GM12878 (cell line): ENCODE measurements at regions of chr1 and their contacts with region 1.

Region 1: DNA sequence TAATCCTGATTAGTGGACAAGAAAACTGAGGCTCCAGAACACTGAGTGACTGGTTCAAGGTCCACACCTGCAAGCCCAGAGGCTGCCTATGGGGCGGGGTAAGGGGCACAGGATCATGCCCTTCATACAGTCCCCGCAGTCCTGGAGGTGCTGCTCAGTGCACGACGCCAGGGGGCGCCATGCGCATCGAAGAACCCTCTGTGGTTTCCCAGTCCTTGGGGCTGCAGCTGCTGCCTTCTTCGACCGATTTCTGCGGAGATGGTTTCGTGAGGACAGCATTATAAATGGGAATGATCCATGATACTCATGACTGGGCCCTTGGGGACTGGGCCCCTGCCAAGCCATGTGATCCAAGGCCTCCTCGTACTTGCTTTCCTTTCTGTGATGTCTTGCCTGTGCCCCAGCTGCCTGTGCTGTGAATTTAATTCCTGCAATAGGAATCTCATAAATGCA is 37.1 kb upstream of the ARHGEF10L start:
- DNase-seq: peak; percentile 4
- ATAC-seq: peak; percentile 100
- H3K4me3 ChIP-seq: no peak overlapping the region
- H3K27ac ChIP-seq: no peak overlapping the region
- H3K4me1 ChIP-seq: no peaks in the 10 kb centered on the region
- H3K27me3 ChIP-seq: no peaks in the 10 kb centered on the region
- CTCF ChIP-seq: peak; percentile 87 to 90 (median 89)
- EP300 ChIP-seq: no peak
- POLR2A ChIP-seq: no peak
- RAD21 ChIP-seq: peak; percentile 77

Region 2: DNA sequence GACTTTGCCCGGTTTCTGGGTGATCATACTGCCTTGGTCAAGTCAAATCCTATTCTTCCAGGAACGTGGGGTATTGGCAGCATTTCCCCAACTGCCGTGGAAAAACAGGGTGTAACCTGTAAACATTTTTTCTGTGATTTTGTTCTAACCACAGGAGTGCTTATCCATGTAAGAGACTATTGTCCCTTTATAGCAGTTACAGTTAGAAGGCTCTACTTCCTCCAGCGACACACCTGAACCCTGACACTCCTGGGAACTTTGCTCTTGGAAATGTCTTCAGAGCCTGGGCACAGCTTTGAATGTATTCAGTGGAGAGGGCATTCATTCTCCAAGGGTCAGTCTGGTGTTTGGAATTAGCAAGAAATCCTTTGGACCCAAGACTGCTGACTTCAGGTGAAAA is 10.8 kb after region 1 on chr1:
- CTCF ChIA-PET with region 1: interaction called, 10 read pairs
- POLR2A ChIA-PET with region 1: no interaction called
- RAD21 ChIA-PET with region 1: no interaction called
- SMC1A ChIA-PET with region 1: interaction called, 3 read pairs
- in situ Hi-C with region 1: no loop called
- intact Hi-C with region 1: no loop called
- DNase-seq: no peak
- ATAC-seq: no peak
- H3K4me3 ChIP-seq: no peak overlapping the region
- H3K27ac ChIP-seq: no peak overlapping the region
- H3K4me1 ChIP-seq: no peaks in the 10 kb centered on the region
- H3K27me3 ChIP-seq: no peaks in the 10 kb centered on the region; a peak in 1 of 4 replicates
- CTCF ChIP-seq: no peak
- EP300 ChIP-seq: no peak
- POLR2A ChIP-seq: no peak
- RAD21 ChIP-seq: no peak

Region 3: DNA sequence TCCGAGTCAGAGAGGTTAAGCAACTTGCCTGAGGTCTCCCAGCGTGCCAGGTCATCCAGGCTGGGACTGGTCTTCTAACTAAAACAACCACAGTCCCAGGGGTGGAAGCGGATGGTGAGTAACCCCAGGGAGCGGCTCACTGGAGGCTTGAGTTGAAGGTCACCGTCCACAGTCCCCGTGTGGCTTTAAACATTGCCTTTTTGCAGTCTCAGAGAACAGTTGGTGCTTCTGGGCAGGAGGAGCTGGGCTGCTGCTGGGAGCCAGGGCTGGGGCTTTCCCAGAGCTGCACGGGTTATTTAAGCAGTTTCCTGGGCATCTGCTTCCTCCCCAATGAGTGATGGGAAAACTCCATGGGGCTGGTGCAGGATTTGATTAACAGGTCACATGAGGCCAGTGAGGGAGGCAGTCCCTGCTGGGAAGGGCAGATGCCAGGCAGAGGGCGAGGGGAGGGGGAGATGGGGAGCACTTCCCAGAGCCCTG is 49.4 kb after region 1 on chr1:
- CTCF ChIA-PET with region 1: interaction called, 6 read pairs
- POLR2A ChIA-PET with region 1: no interaction called
- RAD21 ChIA-PET with region 1: interaction called, 7 read pairs
- SMC1A ChIA-PET with region 1: interaction called, 8 read pairs
- in situ Hi-C with region 1: no loop called
- intact Hi-C with region 1: loop called (anchors 5 kb)
- DNase-seq: no peak
- ATAC-seq: peak; percentile 62
- H3K4me3 ChIP-seq: no peak overlapping the region
- H3K27ac ChIP-seq: no peak overlapping the region
- H3K4me1 ChIP-seq: no peaks in the 10 kb centered on the region
- H3K27me3 ChIP-seq: no peaks in the 10 kb centered on the region
- CTCF ChIP-seq: no peak
- EP300 ChIP-seq: no peak
- POLR2A ChIP-seq: no peak
- RAD21 ChIP-seq: no peak

Region 4: GRCh38 chr1:17581389-17582123 is 79.2 kb after region 1 on chr1:
- CTCF ChIA-PET with region 1: interaction called, 7 read pairs
- POLR2A ChIA-PET with region 1: no interaction called
- RAD21 ChIA-PET with region 1: interaction called, 5 read pairs
- SMC1A ChIA-PET with region 1: interaction called, 14 read pairs
- in situ Hi-C with region 1: no loop called
- intact Hi-C with region 1: no loop called
- DNase-seq: no peak
- ATAC-seq: peak; percentile 84
- H3K4me3 ChIP-seq: no peak overlapping the region
- H3K27ac ChIP-seq: no peak overlapping the region
- H3K4me1 ChIP-seq: peaks cover 4% of the 10 kb centered on the region
- H3K27me3 ChIP-seq: no peaks in the 10 kb centered on the region; a peak in 1 of 4 replicates
- CTCF ChIP-seq: no peak
- EP300 ChIP-seq: no peak
- POLR2A ChIP-seq: no peak
- RAD21 ChIP-seq: no peak

Region 5: DNA sequence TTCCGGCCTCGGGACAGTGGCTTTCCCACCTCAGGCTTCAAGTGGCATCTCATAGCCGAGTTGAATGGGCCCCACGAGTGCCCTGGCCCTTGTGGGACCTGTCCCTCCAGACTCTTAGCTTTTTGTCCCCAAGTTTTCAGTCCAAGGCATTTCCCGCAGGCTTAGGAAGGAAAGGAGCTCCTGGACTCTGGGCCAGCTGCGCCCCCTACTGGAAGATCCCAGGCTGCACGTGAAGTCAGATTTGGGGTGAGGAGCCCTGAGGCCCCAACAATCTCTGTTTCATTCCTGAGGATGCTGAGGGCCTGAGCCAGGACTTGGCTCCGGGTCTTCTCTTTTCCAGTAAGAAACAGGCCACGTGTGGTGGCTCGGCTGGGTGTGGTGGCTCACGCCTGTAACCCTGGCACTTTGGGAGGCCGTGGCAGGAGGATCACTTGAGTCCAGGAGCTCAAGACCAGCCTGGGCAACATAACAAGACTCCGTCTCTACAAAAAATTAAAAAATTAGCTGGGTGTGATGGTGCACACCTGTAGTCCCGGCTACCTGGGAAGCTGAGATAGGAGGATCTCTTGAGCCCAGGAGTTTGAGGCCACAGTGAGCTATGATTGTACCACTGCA is 104.6 kb after region 1 on chr1:
- CTCF ChIA-PET with region 1: interaction called, 255 read pairs
- POLR2A ChIA-PET with region 1: interaction called, 5 read pairs
- RAD21 ChIA-PET with region 1: interaction called, 118 read pairs
- SMC1A ChIA-PET with region 1: interaction called, 88 read pairs
- in situ Hi-C with region 1: loop called (anchors 10 kb)
- intact Hi-C with region 1: loop called (anchors 1 kb)
- DNase-seq: no peak
- ATAC-seq: peak; percentile 81
- H3K4me3 ChIP-seq: no peak overlapping the region
- H3K27ac ChIP-seq: no peak overlapping the region
- H3K4me1 ChIP-seq: no peaks in the 10 kb centered on the region
- H3K27me3 ChIP-seq: no peaks in the 10 kb centered on the region; a peak in 2 of 4 replicates
- CTCF ChIP-seq: peak; percentile 80 to 92 (median 91); a peak in 5 of 6 replicates
- EP300 ChIP-seq: no peak
- POLR2A ChIP-seq: no peak
- RAD21 ChIP-seq: peak; percentile 83

Region 6: GRCh38 chr1:17624611-17625233 is 122.4 kb after region 1 on chr1:
- CTCF ChIA-PET with region 1: no interaction called
- POLR2A ChIA-PET with region 1: no interaction called
- RAD21 ChIA-PET with region 1: no interaction called
- SMC1A ChIA-PET with region 1: no interaction called
- in situ Hi-C with region 1: no loop called
- intact Hi-C with region 1: no loop called
- DNase-seq: no peak
- ATAC-seq: no peak
- H3K4me3 ChIP-seq: no peak overlapping the region
- H3K27ac ChIP-seq: no peak overlapping the region
- H3K4me1 ChIP-seq: no peaks in the 10 kb centered on the region
- H3K27me3 ChIP-seq: peaks cover 0 to 1% of the 10 kb centered on the region in 2 experiments; a peak in 1 of 4 replicates
- CTCF ChIP-seq: no peak
- EP300 ChIP-seq: no peak
- POLR2A ChIP-seq: no peak
- RAD21 ChIP-seq: no peak